Caco-2 (cell line): ENCODE measurements at regions of chr17 and their contacts with region 1.

Region 1: DNA sequence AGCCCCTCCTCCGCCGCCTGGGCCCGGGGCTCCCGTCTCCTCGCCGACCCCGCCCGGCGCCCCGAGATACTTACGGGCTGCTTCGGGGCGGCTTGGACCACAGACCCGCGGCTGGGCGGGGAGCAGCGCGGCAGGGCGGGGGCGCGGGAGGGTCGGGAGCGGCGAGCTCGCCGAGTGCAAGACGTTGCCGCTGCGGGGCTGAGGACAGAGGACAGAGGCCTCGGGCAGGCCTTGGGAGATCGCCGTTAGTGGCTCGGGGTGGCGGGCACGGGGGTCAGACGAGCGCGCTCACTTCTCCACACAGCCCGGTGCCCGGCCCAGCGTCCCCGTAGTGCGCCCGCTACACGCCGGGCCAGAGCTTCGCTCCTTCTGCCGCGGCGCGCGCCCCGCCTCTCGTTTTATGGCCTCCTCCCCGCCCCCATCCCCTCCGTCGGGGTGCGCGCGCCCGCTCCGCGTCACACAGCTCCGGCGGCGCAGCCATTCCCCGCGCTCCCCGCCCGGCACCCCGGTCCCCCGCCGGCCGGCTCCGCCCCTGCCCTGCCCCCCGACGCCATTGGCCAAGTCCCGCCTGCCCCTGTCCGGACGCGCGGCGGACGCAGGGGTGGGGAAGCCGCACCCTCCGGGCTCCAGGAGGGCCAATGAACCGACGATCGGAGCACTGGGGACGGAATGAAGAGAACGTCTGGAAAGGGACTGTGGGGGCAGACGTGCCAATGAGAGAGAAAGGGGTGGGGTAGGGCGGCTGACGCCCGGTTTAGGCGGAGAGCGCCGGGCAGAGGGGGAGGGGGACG is at the start of gene TOB1:
- DNase-seq: peak; percentile 100
- H3K4me3 ChIP-seq: peak within 1 kb of the TSS; percentile 96
- H3K4me3 Mint-ChIP-seq: peak within 1 kb of the TSS; percentile 79
- H3K27ac Mint-ChIP-seq: peak within 1 kb of the TSS; percentile 95
- H3K4me1 ChIP-seq: peaks cover 15% of the 10 kb centered on the region
- H3K4me1 Mint-ChIP-seq: peaks cover 23% of the 10 kb centered on the region
- H3K27me3 ChIP-seq: no peaks in the 10 kb centered on the region
- H3K27me3 Mint-ChIP-seq: no peaks in the 10 kb centered on the region
- CTCF ChIP-seq: no peak
- total RNA-seq, gene TOB1: 114 TPM in 2 replicates

Region 2: GRCh38 chr17:50541716-50542688 is 324.2 kb before region 1 on chr17:
- CTCF ChIA-PET with region 1: no interaction called
- POLR2A ChIA-PET with region 1: interaction called, 14 read pairs
- intact Hi-C with region 1: no loop called
- DNase-seq: peak; percentile 94 to 100
- H3K4me3 ChIP-seq: peak overlapping the region; percentile 45
- H3K4me3 Mint-ChIP-seq: peak overlapping the region; percentile 77
- H3K27ac Mint-ChIP-seq: peak overlapping the region; percentile 39
- H3K4me1 ChIP-seq: peaks cover 66% of the 10 kb centered on the region
- H3K4me1 Mint-ChIP-seq: peaks cover 69% of the 10 kb centered on the region
- H3K27me3 ChIP-seq: no peaks in the 10 kb centered on the region
- H3K27me3 Mint-ChIP-seq: no peaks in the 10 kb centered on the region
- CTCF ChIP-seq: peak; percentile 41 to 57

Region 3: GRCh38 chr17:50841949-50842354 is 24.2 kb before region 1 on chr17:
- CTCF ChIA-PET with region 1: interaction called, 6 read pairs
- POLR2A ChIA-PET with region 1: interaction called, 15 read pairs
- intact Hi-C with region 1: no loop called
- DNase-seq: peak; percentile 89 to 94
- H3K4me3 ChIP-seq: no peak overlapping the region
- H3K4me3 Mint-ChIP-seq: no peak overlapping the region
- H3K27ac Mint-ChIP-seq: no peak overlapping the region
- H3K4me1 ChIP-seq: peaks cover 23% of the 10 kb centered on the region
- H3K4me1 Mint-ChIP-seq: peaks cover 10% of the 10 kb centered on the region
- H3K27me3 ChIP-seq: no peaks in the 10 kb centered on the region
- H3K27me3 Mint-ChIP-seq: no peaks in the 10 kb centered on the region
- CTCF ChIP-seq: peak; percentile 98 to 99

Region 4: DNA sequence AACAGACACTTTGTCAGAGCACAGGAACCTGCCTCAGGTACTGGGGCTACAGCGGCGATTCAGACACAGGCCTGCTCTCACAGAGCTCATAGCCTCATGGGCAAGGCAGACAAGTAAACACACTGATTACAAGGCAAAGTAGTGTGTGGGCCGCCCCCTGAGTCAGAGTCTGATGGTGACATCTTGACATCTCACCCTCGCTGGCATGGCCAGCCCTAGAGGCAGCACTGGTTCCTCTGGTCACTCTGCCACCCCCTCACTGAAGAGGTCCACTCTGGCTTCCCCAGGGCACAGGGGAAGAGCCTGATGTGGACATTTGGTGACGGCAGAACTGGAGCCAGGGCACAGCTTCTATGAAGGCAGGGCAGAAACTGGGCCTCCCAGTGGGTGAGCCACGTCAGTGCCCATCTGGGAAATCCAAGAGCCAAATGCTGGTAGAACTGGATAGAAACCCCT is 32.9 kb after region 1 on chr17:
- CTCF ChIA-PET with region 1: interaction called, 21 read pairs
- POLR2A ChIA-PET with region 1: interaction called, 131 read pairs
- intact Hi-C with region 1: no loop called
- DNase-seq: no peak
- H3K4me3 ChIP-seq: no peak overlapping the region
- H3K4me3 Mint-ChIP-seq: no peak overlapping the region
- H3K27ac Mint-ChIP-seq: no peak overlapping the region
- H3K4me1 ChIP-seq: peaks cover 18% of the 10 kb centered on the region
- H3K4me1 Mint-ChIP-seq: peaks cover 39% of the 10 kb centered on the region
- H3K27me3 ChIP-seq: no peaks in the 10 kb centered on the region
- H3K27me3 Mint-ChIP-seq: no peaks in the 10 kb centered on the region
- CTCF ChIP-seq: no peak

Region 5: DNA sequence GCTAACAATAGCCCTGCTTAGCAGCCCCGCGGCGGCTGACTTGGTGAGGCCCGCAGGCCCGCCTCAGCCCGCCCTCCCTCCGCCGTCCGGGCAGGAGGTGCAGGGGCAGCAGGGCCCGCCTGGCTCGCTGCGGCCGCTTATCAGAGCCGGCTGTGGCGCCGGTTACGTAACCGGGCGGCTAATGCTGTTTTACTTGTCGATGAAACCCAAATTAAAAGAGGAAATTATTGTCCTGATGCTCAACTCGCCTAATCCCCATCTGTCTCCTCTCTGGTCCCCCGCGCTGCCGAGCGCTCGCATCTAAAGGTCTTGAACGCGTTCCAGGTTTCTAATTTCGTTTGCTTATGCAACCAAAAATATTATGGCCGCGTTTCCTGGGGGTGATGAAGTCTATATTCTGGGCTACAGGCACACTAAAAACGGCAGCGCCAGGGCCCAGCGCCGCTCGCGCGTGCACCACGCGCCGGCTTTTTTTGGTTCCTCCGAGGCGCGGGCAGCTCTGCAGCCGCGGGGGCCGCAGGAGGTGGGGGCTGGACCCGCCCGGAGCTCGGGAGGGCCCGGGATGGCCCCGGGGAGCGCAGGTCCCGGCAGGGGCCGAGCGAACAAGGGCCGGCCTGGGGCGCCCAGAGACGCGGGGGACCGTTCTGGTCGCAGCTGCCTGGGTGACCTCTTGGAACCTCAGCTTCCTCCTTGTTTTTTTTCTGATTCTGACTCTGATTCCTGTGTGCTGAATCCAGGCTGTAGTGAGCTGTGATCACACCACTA is 65.1 kb after region 1 on chr17:
- CTCF ChIA-PET with region 1: interaction called, 13 read pairs
- POLR2A ChIA-PET with region 1: interaction called, 104 read pairs
- intact Hi-C with region 1: loop called (anchors 1 kb)
- DNase-seq: peak; percentile 92
- H3K4me3 ChIP-seq: peak overlapping the region; percentile 44
- H3K4me3 Mint-ChIP-seq: peak overlapping the region; percentile 78
- H3K27ac Mint-ChIP-seq: peak overlapping the region; percentile 89
- H3K4me1 ChIP-seq: peaks cover 28% of the 10 kb centered on the region
- H3K4me1 Mint-ChIP-seq: peaks cover 29% of the 10 kb centered on the region
- H3K27me3 ChIP-seq: no peaks in the 10 kb centered on the region
- H3K27me3 Mint-ChIP-seq: no peaks in the 10 kb centered on the region
- CTCF ChIP-seq: no peak

Region 6: GRCh38 chr17:50976951-50977472 is 110.8 kb after region 1 on chr17:
- CTCF ChIA-PET with region 1: no interaction called
- POLR2A ChIA-PET with region 1: interaction called, 10 read pairs
- intact Hi-C with region 1: no loop called
- DNase-seq: no peak
- H3K4me3 ChIP-seq: no peak overlapping the region
- H3K4me3 Mint-ChIP-seq: no peak overlapping the region
- H3K27ac Mint-ChIP-seq: no peak overlapping the region
- H3K4me1 ChIP-seq: peaks cover 17% of the 10 kb centered on the region
- H3K4me1 Mint-ChIP-seq: peaks cover 24% of the 10 kb centered on the region
- H3K27me3 ChIP-seq: no peaks in the 10 kb centered on the region
- H3K27me3 Mint-ChIP-seq: no peaks in the 10 kb centered on the region
- CTCF ChIP-seq: no peak